ENCODE measurements at regions of chr21 and their contacts with region 1.

Region 1: GRCh38 chr21:29125191-29125590 is 5.3 kb upstream of the MAP3K7CL start:
- DNase-seq: no peak
- ATAC-seq: no peak

Region 2: DNA sequence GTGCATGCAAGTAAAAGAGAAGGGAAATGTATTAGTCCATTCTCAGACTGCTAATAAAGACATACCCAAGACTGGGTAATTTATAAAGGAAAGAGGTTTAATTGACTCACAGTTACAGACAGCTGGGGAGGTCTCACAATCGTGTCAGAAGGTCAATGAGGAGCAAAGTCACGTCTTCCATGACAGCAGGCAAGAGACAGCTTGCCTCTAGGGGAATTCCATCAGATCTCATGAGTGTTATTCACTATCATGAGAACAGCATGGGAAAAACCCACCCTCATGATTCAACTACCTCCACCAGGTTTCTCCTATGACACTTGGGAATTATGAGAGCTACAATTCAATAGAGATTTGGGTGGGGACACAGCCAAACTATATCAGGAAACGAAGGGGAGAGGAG is 1585.3 kb after region 1 on chr21:
- intact Hi-C with region 1: loop called (anchors 5 kb)
- DNase-seq: no peak
- ATAC-seq: no peak

Measured in sciatic nerve (tissue), 2 donors.